Esophagus squamous epithelium (tissue), 5 donors: ENCODE measurements at regions of chr3 and their contacts with region 1.

Region 1: GRCh38 chr3:58317811-58318210 is 11.5 kb downstream of the HTD2 start:
- DNase-seq: no peak
- H3K4me3 ChIP-seq: no peak overlapping the region
- H3K27ac ChIP-seq: no peak overlapping the region
- H3K4me1 ChIP-seq: no peaks in the 10 kb centered on the region
- H3K27me3 ChIP-seq: no peaks in the 10 kb centered on the region
- CTCF ChIP-seq: no peak
- POLR2A ChIP-seq: no peak

Region 2: DNA sequence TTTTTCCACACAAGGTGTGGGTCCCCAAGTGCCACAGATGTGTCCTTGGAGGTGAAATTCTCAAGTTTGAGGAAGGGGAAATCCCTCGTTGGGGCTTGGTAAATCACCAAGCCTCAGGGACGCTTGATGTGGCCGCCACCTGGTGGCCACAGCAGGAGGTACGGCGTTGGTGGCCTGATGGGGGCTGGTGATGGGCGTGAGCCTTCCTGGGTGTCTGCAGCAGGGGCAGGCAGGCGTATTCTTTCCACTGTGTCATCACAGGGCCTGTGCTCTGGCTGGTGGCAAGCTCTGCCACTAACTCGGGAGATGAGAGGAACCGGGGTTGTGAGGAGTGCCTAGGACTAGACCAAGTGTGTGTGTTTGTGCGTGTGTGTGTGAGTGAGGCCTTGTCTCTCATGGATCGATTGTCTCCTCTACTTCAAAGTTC is 215.0 kb after region 1 on chr3:
- intact Hi-C with region 1: loop called (anchors 5 kb)
- DNase-seq: no peak
- H3K4me3 ChIP-seq: no peak overlapping the region
- H3K27ac ChIP-seq: no peak overlapping the region
- H3K4me1 ChIP-seq: peaks cover 27 to 65% (median 40%) of the 10 kb centered on the region in 3 donors
- H3K27me3 ChIP-seq: no peaks in the 10 kb centered on the region
- CTCF ChIP-seq: peak; percentile 83 to 97 (median 94)
- POLR2A ChIP-seq: no peak

Region 3: GRCh38 chr3:58630076-58630709 is 312.4 kb after region 1 on chr3:
- intact Hi-C with region 1: loop called (anchors 10 kb)
- DNase-seq: no peak
- H3K4me3 ChIP-seq: no peak overlapping the region
- H3K27ac ChIP-seq: peak overlapping the region in 3 of 4 donors; percentile 69 to 82 (median 69)
- H3K4me1 ChIP-seq: peaks cover 6 to 39% (median 27%) of the 10 kb centered on the region in 3 donors
- H3K27me3 ChIP-seq: no peaks in the 10 kb centered on the region
- CTCF ChIP-seq: peak; percentile 90 to 98 (median 94)
- POLR2A ChIP-seq: no peak

Region 4: DNA sequence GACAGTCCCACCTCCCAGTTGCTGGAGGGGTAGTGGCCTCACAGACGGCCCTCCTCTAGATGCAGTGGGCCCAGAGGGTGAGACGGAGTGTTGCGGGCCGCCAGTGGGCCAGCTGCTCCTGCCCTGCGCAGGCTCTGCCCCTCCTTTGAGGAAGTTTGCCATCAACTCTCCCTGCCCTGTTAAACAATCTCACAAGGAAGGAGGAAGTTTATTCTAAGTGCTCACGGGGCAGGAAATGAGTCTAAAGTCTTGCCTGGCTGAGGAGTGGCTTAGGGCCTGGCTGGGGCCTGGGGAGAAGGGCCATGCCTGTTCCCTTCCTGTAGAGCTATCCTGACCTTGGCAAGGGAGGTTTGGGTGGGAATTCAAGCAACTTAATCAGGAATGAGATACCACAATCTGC is 348.9 kb after region 1 on chr3 and contains the start of gene FAM3D:
- intact Hi-C with region 1: no loop called
- DNase-seq: no peak
- H3K4me3 ChIP-seq: peak within 1 kb of the TSS in 3 of 4 donors; percentile 7 to 27 (median 15)
- H3K27ac ChIP-seq: peak within 1 kb of the TSS; percentile 45 to 59 (median 50)
- H3K4me1 ChIP-seq: peaks cover 0 to 19% (median 4%) of the 10 kb centered on the region in 3 donors
- H3K27me3 ChIP-seq: no peaks in the 10 kb centered on the region
- CTCF ChIP-seq: no peak
- POLR2A ChIP-seq: no peak
- total RNA-seq, gene FAM3D: 84.3 to 214 (median 128) TPM